ENCODE measurements at regions of chr5 and their contacts with region 1.

Region 1: DNA sequence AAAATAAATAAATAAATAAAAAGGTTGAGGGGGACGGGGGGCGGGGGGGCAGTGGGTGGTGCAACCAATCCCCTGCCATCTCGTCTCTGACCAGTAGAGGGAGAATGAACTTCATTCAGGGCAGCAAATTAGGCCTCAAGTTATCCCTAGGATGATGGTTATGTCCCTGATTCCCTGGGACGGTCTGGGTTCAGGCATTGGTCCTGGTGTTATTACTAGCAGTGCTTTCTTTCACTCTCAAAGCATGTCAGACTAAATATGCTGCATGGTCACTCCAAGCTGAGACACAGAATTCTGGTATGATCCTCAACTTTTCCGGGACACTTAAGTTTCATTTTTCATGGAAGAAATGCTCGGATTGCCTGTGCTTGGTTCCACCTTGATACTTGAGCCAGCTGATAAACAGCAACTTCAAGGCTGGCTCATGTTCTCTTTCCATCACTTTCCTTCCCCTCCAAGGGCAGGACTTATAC is 59.4 kb downstream of the DAP start:
- DNase-seq: peak; percentile 75 to 79 (median 79)
- ATAC-seq: peak; percentile 66
- H3K4me3 ChIP-seq: no peak overlapping the region
- H3K27ac ChIP-seq: peak overlapping the region; percentile 82
- H3K4me1 ChIP-seq: peaks cover 29 to 49% of the 10 kb centered on the region in 2 experiments
- H3K27me3 ChIP-seq: no peaks in the 10 kb centered on the region
- CTCF ChIP-seq: peak; percentile 51 to 63 (median 54)
- EP300 ChIP-seq: no peak
- POLR2A ChIP-seq: no peak
- RAD21 ChIP-seq: peak in 1 of 2 experiments; percentile 53; a peak in 3 of 4 replicates

Region 2: GRCh38 chr5:10577371-10578292 is 124.0 kb before region 1 on chr5:
- CTCF ChIA-PET with region 1: no interaction called
- POLR2A ChIA-PET with region 1: no interaction called
- in situ Hi-C with region 1: no loop called
- intact Hi-C with region 1: no loop called
- DNase-seq: peak in 2 of 4 experiments; percentile 50 to 80
- ATAC-seq: peak; percentile 58
- H3K4me3 ChIP-seq: no peak overlapping the region
- H3K27ac ChIP-seq: peak overlapping the region; percentile 12; the same call in 1 of the 3 replicates
- H3K4me1 ChIP-seq: peaks cover 10 to 16% of the 10 kb centered on the region in 2 experiments; a peak in 4 of 5 replicates
- H3K27me3 ChIP-seq: no peaks in the 10 kb centered on the region
- CTCF ChIP-seq: no peak
- EP300 ChIP-seq: peak; percentile 22; the same call in 1 of the 2 replicates
- POLR2A ChIP-seq: no peak
- RAD21 ChIP-seq: no peak

Region 3: GRCh38 chr5:10712574-10713517 is 11.2 kb after region 1 on chr5:
- CTCF ChIA-PET with region 1: no interaction called
- POLR2A ChIA-PET with region 1: interaction called, 12 read pairs
- in situ Hi-C with region 1: no loop called
- intact Hi-C with region 1: no loop called
- DNase-seq: no peak
- ATAC-seq: no peak
- H3K4me3 ChIP-seq: no peak overlapping the region
- H3K27ac ChIP-seq: no peak overlapping the region
- H3K4me1 ChIP-seq: peaks cover 24 to 27% of the 10 kb centered on the region in 2 experiments; a peak in 4 of 5 replicates
- H3K27me3 ChIP-seq: no peaks in the 10 kb centered on the region
- CTCF ChIP-seq: no peak
- EP300 ChIP-seq: no peak
- POLR2A ChIP-seq: no peak
- RAD21 ChIP-seq: no peak

Region 4: GRCh38 chr5:10724799-10725507 is 23.4 kb after region 1 on chr5:
- CTCF ChIA-PET with region 1: interaction called, 3 read pairs
- POLR2A ChIA-PET with region 1: interaction called, 7 read pairs
- in situ Hi-C with region 1: no loop called
- intact Hi-C with region 1: loop called (anchors 1 kb)
- DNase-seq: peak; percentile 86 to 92 (median 88)
- ATAC-seq: peak; percentile 95
- H3K4me3 ChIP-seq: no peak overlapping the region
- H3K27ac ChIP-seq: peak overlapping the region; percentile 82
- H3K4me1 ChIP-seq: peaks cover 24 to 53% of the 10 kb centered on the region in 2 experiments
- H3K27me3 ChIP-seq: no peaks in the 10 kb centered on the region
- CTCF ChIP-seq: peak; percentile 87 to 96 (median 89)
- EP300 ChIP-seq: no peak
- POLR2A ChIP-seq: peak; percentile 26; the same call in 1 of the 2 replicates
- RAD21 ChIP-seq: peak; percentile 52 to 84; a peak in 3 of 4 replicates

Region 5: DNA sequence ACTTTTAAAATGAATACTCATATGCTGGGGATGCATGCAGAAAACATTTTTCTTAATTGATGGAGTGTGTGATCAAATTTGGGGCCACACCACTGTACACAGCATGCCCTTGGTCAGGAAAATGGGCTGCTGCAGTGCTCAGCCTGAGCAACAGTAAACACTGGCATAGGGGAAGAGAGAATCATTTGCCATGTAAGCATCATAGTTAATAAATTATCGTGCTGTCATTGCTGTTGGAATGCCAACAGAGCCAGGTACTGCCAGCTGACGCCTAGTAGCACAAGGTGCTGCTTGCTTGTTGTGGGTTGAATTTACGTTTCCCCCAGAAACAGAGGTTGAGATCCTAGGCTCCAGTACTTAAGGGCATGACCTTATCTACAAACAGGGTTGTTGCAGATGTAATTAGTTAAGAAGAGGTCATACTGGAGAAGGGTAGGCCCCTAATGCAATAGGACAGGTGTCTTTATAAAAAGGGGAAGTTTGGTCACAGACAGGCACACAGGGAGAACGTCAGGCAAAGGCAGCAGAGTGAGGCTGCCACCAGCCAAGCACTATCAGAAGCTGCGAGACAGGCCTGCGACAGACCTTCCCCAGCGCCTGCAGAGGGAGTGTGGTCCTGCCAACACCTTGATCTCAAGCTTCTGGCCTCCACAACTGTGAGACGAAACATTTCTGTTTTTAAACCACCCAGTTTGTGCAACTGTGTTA is 34.1 kb after region 1 on chr5:
- CTCF ChIA-PET with region 1: no interaction called
- POLR2A ChIA-PET with region 1: interaction called, 5 read pairs
- in situ Hi-C with region 1: no loop called
- intact Hi-C with region 1: loop called (anchors 2 kb)
- DNase-seq: peak in 2 of 4 experiments; percentile 35 to 70
- ATAC-seq: peak; percentile 68
- H3K4me3 ChIP-seq: no peak overlapping the region
- H3K27ac ChIP-seq: peak overlapping the region; percentile 25; the same call in 2 of the 3 replicates
- H3K4me1 ChIP-seq: peaks cover 23 to 54% of the 10 kb centered on the region in 2 experiments
- H3K27me3 ChIP-seq: no peaks in the 10 kb centered on the region
- CTCF ChIP-seq: peak; percentile 17 to 46 (median 32); a peak in 3 of 6 replicates
- EP300 ChIP-seq: peak; percentile 16; the same call in 1 of the 2 replicates
- POLR2A ChIP-seq: no peak
- RAD21 ChIP-seq: peak; percentile 25 to 27; a peak in 1 of 4 replicates

Region 6: GRCh38 chr5:10761166-10761932 is 59.7 kb after region 1 on chr5 and contains the start of gene DAP:
- CTCF ChIA-PET with region 1: interaction called, 3 read pairs
- POLR2A ChIA-PET with region 1: interaction called, 3 read pairs
- in situ Hi-C with region 1: no loop called
- intact Hi-C with region 1: loop called (anchors 2 kb)
- DNase-seq: peak; percentile 94 to 95 (median 94)
- ATAC-seq: peak; percentile 75
- H3K4me3 ChIP-seq: peak within 1 kb of the TSS; percentile 88
- H3K27ac ChIP-seq: peak within 1 kb of the TSS; percentile 95
- H3K4me1 ChIP-seq: peaks cover 18 to 36% of the 10 kb centered on the region in 2 experiments
- H3K27me3 ChIP-seq: no peaks in the 10 kb centered on the region
- CTCF ChIP-seq: no peak
- EP300 ChIP-seq: no peak
- POLR2A ChIP-seq: peak; percentile 75
- RAD21 ChIP-seq: 0 out of 4 replicates have a peak, but pooled peaks of 1 of the 2 experiments have one; percentile 7
- polyA plus RNA-seq, gene DAP: 14.1 to 21.7 TPM

Region 7: GRCh38 chr5:10801931-10802659 is 100.5 kb after region 1 on chr5:
- CTCF ChIA-PET with region 1: interaction called, 3 read pairs
- POLR2A ChIA-PET with region 1: no interaction called
- in situ Hi-C with region 1: no loop called
- intact Hi-C with region 1: loop called (anchors 5 kb)
- DNase-seq: peak in 1 of 4 experiments; percentile 19
- ATAC-seq: peak; percentile 79
- H3K4me3 ChIP-seq: no peak overlapping the region
- H3K27ac ChIP-seq: no peak overlapping the region
- H3K4me1 ChIP-seq: no peaks in the 10 kb centered on the region
- H3K27me3 ChIP-seq: peaks cover 15 to 16% of the 10 kb centered on the region in 2 experiments
- CTCF ChIP-seq: peak; percentile 14 to 49 (median 40); a peak in 3 of 6 replicates
- EP300 ChIP-seq: no peak
- POLR2A ChIP-seq: no peak
- RAD21 ChIP-seq: peak in 1 of 2 experiments; percentile 62; a peak in 3 of 4 replicates

Region 8: DNA sequence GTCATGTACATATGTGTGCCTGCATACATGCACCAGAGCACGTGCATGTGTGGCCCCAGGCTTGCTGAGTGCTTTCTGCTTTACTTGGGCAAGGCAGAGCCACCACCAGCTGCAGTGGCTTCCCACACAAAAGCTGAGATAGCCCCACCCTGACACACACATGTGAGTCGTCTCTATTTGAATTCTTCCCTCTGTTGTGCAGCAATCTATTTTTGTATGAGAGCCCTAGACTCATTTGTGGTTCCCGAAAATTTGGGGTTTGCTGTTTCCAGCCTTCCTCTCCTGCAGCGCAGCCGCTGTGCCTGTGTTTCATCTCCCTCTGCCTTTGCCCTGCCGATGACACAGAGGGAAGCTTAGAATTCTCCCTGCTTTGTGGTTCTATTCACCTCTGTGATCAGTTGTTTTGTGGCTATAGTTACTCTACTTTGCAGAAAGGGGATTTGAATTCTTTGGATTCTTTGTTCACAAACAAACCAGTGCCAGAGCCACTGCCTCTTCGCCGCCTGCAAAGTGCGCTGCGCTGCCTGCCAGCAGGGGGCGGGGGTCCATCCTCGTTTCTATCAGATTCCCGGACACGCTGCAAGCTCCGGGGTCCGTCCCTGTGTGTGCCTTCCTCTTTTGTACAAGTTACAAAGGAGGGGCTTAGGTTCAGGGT is 155.2 kb after region 1 on chr5:
- CTCF ChIA-PET with region 1: no interaction called
- POLR2A ChIA-PET with region 1: interaction called, 3 read pairs
- in situ Hi-C with region 1: no loop called
- intact Hi-C with region 1: loop called (anchors 2 kb)
- DNase-seq: peak; percentile 61 to 73 (median 64)
- ATAC-seq: peak; percentile 86
- H3K4me3 ChIP-seq: no peak overlapping the region
- H3K27ac ChIP-seq: no peak overlapping the region
- H3K4me1 ChIP-seq: peaks cover 0 to 4% of the 10 kb centered on the region in 2 experiments; a peak in 1 of 5 replicates
- H3K27me3 ChIP-seq: peaks cover 24 to 69% of the 10 kb centered on the region in 2 experiments
- CTCF ChIP-seq: peak; percentile 75 to 94 (median 78)
- EP300 ChIP-seq: no peak
- POLR2A ChIP-seq: no peak
- RAD21 ChIP-seq: peak in 1 of 2 experiments; percentile 54; a peak in 2 of 4 replicates

Measured in K562 (cell line).